ENCODE measurements at regions of chr9 and their contacts with region 1.

Region 1: DNA sequence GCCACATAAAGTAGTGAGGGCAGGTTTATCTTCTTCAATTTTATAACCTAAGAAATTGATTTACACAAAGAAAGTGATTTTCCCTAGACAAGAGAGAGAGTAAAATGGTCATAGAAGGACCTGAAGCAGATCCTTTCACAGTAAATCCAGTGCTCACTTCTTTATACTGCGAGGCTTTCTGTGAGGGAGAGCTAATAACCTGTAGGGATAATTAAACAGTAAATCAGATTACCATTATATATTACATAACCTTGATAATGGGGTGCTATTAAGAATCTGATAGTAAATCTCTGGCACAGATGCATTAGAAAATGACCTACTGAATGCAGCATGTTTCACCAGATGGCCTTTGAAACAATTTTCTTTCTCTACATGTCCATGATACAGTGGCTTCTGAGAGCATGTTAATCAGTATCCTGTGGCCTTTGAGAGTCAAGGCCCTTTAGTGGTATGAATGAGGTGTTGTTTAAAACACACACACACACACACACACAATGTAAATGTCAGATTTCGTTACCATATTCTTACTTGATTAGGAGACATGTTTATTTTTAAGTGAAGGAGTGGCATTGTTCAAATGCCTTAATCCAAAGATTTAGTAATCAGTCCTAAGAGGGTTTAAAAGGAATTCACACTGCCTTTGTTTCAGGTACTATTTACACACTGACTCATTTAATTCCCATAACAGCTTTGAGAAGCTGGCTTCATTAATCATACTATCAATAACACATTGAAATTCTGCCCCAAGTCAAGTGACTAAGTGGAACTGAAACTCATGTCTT is 124.7 kb downstream of the ALDH1A1 start:
- DNase-seq: no peak
- H3K4me3 ChIP-seq: no peak overlapping the region
- H3K27ac ChIP-seq: peak overlapping the region in 1 of 4 donors; percentile 19
- H3K4me1 ChIP-seq: peaks cover 0 to 20% (median 11%) of the 10 kb centered on the region in 4 donors
- H3K27me3 ChIP-seq: no peaks in the 10 kb centered on the region
- CTCF ChIP-seq: no peak
- EP300 ChIP-seq: no peak
- POLR2A ChIP-seq: no peak

Region 2: DNA sequence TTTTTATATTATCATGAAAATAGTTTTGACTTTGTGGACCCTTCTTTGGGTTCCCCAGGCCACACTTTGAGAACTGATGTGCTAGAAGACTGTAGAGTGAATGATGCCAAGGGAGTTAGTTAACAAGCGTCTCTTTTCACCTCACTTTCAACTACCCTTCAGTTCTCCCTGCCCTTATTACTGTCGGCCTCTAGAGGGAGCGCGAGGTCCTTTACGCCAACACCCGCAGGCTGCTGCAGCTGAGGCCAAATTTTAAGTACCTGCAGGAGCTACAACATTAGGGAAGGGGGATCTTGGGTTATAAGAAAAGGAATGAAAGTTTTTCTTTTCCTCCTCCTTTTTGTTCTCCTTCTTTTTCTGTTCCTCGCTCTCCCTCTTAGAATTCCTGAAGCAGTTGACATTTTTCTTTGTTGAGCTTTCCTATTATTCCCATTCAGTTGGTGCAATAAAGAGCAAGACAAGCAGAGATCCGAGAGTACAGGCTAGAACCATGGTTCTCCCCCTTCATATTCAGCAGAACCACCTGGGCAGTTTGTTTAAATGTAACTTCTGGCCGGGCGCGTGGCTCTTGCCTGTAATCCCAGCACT is 547.1 kb before region 1 on chr9:
- in situ Hi-C with region 1: loop called (anchors 5 to 25 kb)
- intact Hi-C with region 1: loop called (anchors 10 kb)
- DNase-seq: peak; percentile 76
- H3K4me3 ChIP-seq: no peak overlapping the region
- H3K27ac ChIP-seq: no peak overlapping the region
- H3K4me1 ChIP-seq: peaks cover 0 to 9% (median 0%) of the 10 kb centered on the region in 4 donors
- H3K27me3 ChIP-seq: no peaks in the 10 kb centered on the region
- CTCF ChIP-seq: peak; percentile 83 to 93 (median 88)
- EP300 ChIP-seq: no peak
- POLR2A ChIP-seq: no peak

Measured in transverse colon (tissue), 4 donors.